ENCODE measurements at regions of chr1 and their contacts with region 1.

Region 1: DNA sequence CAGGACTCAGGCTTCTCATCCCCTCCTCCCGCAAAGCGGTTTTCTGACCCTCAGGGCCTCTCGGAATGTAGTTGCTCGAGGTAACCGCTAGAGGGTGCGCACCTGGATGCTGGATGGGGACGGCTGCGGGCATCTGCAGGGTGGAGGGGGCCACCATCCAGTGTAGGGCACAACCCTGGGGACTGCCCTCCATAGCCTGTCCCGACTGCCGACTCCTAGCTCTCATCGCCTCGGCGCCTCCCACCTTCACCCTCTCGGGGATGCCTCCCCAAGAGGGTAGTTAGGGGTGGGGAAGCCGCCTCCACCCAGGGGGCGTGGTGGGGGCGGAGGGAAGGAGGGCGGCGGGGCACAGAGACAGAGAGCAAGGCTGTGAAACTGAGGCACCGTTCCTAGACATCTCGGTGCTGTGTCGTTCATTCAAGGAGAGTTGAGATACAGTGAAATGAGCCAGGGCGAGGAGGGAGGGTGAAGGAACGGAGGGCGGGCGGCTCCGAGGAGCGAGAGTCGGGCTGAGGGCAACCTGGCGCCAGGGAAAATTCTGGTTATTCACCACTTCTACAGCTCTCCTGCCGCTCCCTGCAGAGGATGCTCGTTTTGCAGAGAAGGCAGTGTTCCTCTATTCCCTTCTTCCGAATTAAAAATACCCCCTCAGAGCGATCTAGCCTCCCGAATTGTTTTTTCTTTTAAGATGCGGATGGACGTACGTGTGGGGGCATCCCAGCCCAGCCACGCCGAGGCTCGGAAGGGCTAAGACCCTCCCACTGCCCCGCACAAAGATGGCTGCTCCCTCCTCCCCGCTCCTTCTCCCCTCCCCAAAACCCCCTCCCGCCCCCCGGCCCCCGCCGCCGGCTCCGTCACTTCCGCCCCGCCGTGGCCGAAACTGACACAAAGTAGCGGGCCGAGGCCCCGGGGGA is at the start of gene ATP8B2:
- DNase-seq: peak; percentile 80
- ATAC-seq: peak; percentile 46
- H3K4me3 Mint-ChIP-seq: peak within 1 kb of the TSS; percentile 97
- H3K27ac Mint-ChIP-seq: peak within 1 kb of the TSS; percentile 90
- H3K4me1 Mint-ChIP-seq: peaks cover 39% of the 10 kb centered on the region
- H3K27me3 Mint-ChIP-seq: peaks cover 12% of the 10 kb centered on the region
- total RNA-seq, gene ATP8B2: 91.2 to 95.4 TPM

Region 2: DNA sequence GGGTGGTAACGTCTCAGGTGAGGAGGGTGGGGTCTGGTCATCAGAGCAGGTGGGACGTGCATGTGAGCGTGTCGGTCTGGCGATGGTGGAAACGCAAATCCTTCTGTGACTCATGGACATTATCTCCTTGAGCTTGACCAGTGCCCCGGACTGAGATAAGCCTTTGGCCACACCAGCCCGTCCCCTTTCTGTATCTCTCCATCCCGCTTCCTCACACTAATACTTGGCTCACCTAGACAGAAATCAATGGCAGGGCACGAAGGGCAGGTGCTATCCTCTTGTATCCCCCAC is 11.9 kb before region 1 on chr1:
- POLR2A ChIA-PET with region 1: no interaction called
- DNase-seq: no peak
- ATAC-seq: no peak
- H3K4me3 Mint-ChIP-seq: no peak overlapping the region
- H3K27ac Mint-ChIP-seq: no peak overlapping the region
- H3K4me1 Mint-ChIP-seq: no peaks in the 10 kb centered on the region
- H3K27me3 Mint-ChIP-seq: peaks cover 4% of the 10 kb centered on the region

Region 3: DNA sequence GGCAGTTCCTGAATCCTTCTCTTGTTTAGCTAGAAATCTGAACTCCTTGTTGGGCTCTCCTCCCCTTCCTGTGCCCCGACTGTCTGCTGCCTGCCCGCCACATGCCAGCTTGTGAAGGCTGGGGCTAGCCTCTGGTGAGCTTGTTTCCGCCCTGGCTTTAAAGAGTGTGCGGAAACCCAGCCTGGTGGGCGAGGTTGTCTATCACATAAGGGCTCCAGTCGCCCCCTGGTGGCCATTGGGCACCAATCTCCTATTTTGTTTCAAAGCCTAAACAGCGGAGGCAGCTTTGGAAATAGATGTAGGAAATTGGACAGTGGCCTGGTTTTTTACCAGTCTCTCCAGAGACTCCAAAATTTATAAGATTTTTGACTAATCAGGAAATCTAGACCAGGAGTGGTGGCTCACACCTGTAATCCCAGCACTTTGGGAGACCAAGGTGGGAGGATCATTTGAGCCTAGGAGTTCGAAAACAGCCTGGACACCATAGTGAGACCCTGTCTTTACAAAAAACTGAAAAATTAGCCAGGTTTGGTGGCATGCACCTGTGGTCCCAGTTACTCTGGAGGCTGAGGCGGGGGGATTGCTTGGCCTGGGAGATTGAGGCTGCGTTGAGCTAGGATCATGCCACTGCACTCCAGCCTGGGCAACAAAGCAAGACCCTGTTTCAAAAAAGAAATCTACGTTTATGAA is 10.2 kb after region 1 on chr1:
- POLR2A ChIA-PET with region 1: interaction called, 46 read pairs
- DNase-seq: peak; percentile 86
- ATAC-seq: peak; percentile 90
- H3K4me3 Mint-ChIP-seq: peak overlapping the region; percentile 60
- H3K27ac Mint-ChIP-seq: peak overlapping the region; percentile 81
- H3K4me1 Mint-ChIP-seq: peaks cover 56% of the 10 kb centered on the region
- H3K27me3 Mint-ChIP-seq: no peaks in the 10 kb centered on the region

Region 4: DNA sequence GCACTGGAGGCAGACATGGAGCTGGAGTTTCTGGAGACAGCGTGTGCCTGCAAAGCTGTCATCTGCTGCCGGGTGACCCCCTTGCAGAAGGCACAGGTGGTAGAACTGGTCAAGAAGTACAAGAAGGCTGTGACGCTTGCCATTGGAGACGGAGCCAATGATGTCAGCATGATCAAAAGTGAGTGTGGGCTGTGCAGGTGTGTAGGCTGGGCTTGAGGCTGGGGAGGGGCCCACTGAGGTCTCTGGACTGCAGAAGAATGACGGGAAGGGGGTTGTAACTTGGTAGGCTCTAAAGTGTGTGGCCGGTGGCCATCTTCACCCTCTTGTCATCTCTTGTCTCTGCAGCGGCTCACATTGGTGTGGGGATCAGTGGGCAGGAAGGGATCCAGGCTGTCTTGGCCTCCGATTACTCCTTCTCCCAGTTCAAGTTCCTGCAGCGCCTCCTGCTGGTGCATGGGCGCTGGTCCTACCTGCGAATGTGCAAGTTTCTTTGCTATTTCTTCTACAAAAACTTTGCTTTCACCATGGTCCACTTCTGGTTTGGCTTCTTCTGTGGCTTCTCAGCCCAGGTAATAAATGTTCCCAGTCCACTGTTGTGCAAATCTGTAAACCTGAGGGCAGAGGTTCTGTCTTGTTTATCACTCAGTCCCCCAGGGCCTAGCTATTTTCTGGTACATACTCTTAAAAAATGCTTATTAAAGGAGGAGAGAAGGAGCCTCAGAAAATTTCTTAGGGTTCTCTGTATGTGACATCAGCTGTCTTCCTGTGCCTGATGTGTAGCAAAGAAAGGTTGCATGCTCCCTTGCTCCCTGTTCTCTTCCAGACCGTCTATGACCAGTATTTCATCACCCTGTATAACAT is 20.3 kb after region 1 on chr1:
- POLR2A ChIA-PET with region 1: interaction called, 33 read pairs
- DNase-seq: peak; percentile 79
- ATAC-seq: no peak
- H3K4me3 Mint-ChIP-seq: no peak overlapping the region
- H3K27ac Mint-ChIP-seq: peak overlapping the region; percentile 12
- H3K4me1 Mint-ChIP-seq: peaks cover 43% of the 10 kb centered on the region
- H3K27me3 Mint-ChIP-seq: no peaks in the 10 kb centered on the region